ENCODE measurements at regions of chr12 and their contacts with region 1.

Region 1: GRCh38 chr12:16349131-16349460 is 1.7 kb downstream of the MGST1 start:
- DNase-seq: peak; percentile 85
- H3K4me3 ChIP-seq: peak overlapping the region; percentile 72 to 96 (median 93)
- H3K27ac ChIP-seq: peak overlapping the region; percentile 91
- H3K4me1 ChIP-seq: peaks cover 29% of the 10 kb centered on the region
- H3K27me3 ChIP-seq: no peaks in the 10 kb centered on the region
- CTCF ChIP-seq: no peak

Region 2: DNA sequence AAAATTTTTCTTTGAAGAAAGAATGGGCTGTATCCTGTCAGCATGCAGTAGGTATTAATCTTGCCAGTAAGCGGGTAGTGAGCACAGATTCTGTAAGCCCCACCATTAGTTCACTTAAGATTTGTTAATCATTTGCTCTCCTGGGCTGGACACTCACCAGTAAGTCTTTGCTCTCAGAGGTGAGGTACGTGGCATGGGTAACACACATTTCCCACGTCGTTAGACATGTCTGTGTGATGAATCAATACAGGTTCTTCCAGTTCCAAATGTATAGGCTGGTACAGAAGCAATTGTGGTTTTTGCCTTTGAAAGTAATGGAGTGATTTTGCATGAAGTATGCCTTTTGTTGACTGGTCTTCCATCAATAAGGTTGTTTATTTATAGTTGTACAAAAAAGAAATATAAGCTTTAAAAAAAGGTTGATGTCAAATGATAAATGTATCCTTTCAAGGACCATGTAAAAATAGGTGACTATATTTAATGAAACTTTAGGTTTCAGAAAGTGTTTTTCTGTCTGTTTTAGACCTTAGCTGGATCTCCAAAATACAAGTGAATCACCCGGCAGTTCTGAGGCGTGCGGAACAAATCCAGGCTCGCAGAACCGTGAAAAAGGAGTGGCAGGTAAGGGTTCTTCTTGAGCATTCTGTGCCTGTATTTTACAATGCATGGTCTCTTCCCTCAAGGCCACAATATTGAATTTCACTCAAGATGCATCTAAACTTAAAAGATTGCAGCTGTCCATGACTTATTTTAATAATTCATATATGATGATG is 392.5 kb before region 1 on chr12:
- CTCF ChIA-PET with region 1: no interaction called
- dilution Hi-C with region 1: no loop called
- in situ Hi-C with region 1: no loop called
- intact Hi-C with region 1: loop called (anchors 1 kb)
- DNase-seq: peak; percentile 98
- H3K4me3 ChIP-seq: peak overlapping the region in 2 of 3 experiments; percentile 24 to 34
- H3K27ac ChIP-seq: peak overlapping the region; percentile 95
- H3K4me1 ChIP-seq: peaks cover 23% of the 10 kb centered on the region
- H3K27me3 ChIP-seq: no peaks in the 10 kb centered on the region
- CTCF ChIP-seq: no peak

Region 3: DNA sequence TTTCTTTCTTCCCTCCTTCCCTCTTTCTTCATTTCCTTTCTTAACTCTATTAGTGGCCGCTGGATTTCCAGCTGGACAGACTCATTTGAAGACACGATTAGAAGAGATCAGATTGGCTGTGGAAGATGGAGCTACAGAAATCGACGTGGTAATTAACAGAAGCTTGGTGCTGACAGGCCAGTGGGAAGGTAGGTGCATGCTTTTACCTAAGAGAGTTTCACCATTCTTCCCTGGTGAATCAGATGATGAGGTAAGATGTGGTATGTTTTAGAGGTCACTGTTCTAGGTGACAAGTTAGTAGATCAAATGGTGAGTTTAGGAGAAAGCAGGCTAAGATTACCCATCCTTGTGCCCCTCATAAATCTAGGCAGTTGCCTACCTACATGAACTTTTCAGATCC is 386.3 kb before region 1 on chr12:
- CTCF ChIA-PET with region 1: interaction called, 20 read pairs
- dilution Hi-C with region 1: no loop called
- in situ Hi-C with region 1: no loop called
- intact Hi-C with region 1: no loop called
- DNase-seq: peak; percentile 87
- H3K4me3 ChIP-seq: no peak overlapping the region
- H3K27ac ChIP-seq: peak overlapping the region; percentile 71
- H3K4me1 ChIP-seq: peaks cover 19% of the 10 kb centered on the region
- H3K27me3 ChIP-seq: no peaks in the 10 kb centered on the region
- CTCF ChIP-seq: no peak

Region 4: GRCh38 chr12:16449459-16449858 is 100.4 kb after region 1 on chr12:
- CTCF ChIA-PET with region 1: no interaction called
- dilution Hi-C with region 1: no loop called
- in situ Hi-C with region 1: no loop called
- intact Hi-C with region 1: no loop called
- DNase-seq: no peak
- H3K4me3 ChIP-seq: no peak overlapping the region
- H3K27ac ChIP-seq: no peak overlapping the region
- H3K4me1 ChIP-seq: no peaks in the 10 kb centered on the region
- H3K27me3 ChIP-seq: no peaks in the 10 kb centered on the region
- CTCF ChIP-seq: no peak